CD14-positive monocyte (primary cell): ENCODE measurements at regions of chr17 and their contacts with region 1.

Region 1: GRCh38 chr17:31008374-31009041 is 37.7 kb downstream of the RNF135 start:
- DNase-seq: peak; percentile 43 to 57 (median 51)
- H3K4me3 ChIP-seq: peak overlapping the region; percentile 40 to 85 (median 40)
- H3K4me3 Mint-ChIP-seq: peak overlapping the region; percentile 91 to 94
- H3K27ac ChIP-seq: peak overlapping the region in 1 of 2 donors; percentile 38
- H3K27ac Mint-ChIP-seq: peak overlapping the region in 4 of 7 donors; percentile 35 to 83 (median 60)
- H3K4me1 ChIP-seq: peaks cover 18 to 28% of the 10 kb centered on the region in 2 donors
- H3K4me1 Mint-ChIP-seq: peaks cover 27% of the 10 kb centered on the region
- H3K27me3 ChIP-seq: peaks cover 0 to 5% of the 10 kb centered on the region in 2 donors
- H3K27me3 Mint-ChIP-seq: peaks cover 5 to 9% (median 6%) of the 10 kb centered on the region in 3 donors
- CTCF ChIP-seq: no peak

Region 2: DNA sequence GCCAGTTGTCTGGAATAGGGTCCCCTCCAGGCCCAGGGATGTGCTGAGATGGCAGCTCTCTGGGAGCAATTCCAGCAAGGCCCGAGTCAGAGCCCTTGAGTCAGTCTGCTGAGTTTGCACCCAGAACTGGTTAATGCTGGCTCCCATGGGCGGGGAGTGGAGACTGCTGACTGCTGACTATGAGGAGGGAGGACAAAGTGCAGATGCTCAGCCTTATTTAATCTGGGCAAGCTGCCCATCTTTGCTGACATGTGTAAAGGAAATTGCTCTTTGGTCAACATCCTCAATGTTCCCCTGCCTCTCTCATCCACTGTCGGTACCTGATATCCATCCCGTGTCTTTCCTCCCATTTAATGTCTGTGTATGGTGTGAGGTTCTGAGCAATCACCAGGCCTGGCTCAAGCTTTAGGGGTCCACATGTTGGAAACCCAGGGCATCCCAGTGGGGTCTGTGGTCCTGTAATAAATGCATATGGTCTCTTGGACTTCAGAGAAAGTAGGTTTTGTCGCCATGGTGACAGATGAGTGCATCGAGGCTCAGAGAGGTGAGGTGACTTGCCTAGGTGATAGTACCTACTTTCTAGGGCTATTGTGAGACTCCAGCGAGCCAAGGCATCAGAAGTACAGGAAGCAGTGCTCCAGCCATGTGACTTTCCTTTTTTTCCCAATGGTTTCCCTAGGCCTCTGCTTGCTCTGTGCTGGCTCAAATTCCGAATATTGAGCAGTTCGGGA is 57.7 kb before region 1 on chr17:
- intact Hi-C with region 1: no loop called
- DNase-seq: peak; percentile 73 to 77 (median 76)
- H3K4me3 ChIP-seq: peak overlapping the region in 1 of 3 experiments; percentile 18
- H3K4me3 Mint-ChIP-seq: peak overlapping the region in 1 of 2 donors; percentile 48
- H3K27ac ChIP-seq: peak overlapping the region; percentile 78 to 80
- H3K27ac Mint-ChIP-seq: peak overlapping the region; percentile 80 to 99 (median 90)
- H3K4me1 ChIP-seq: peaks cover 73% of the 10 kb centered on the region in 2 donors
- H3K4me1 Mint-ChIP-seq: peaks cover 64% of the 10 kb centered on the region
- H3K27me3 ChIP-seq: no peaks in the 10 kb centered on the region
- H3K27me3 Mint-ChIP-seq: peaks cover 0 to 5% (median 2%) of the 10 kb centered on the region in 3 donors
- CTCF ChIP-seq: no peak

Region 3: GRCh38 chr17:31130286-31131224 is 122.0 kb after region 1 on chr17:
- intact Hi-C with region 1: no loop called
- DNase-seq: peak in 1 of 3 donors; percentile 2
- H3K4me3 ChIP-seq: no peak overlapping the region
- H3K4me3 Mint-ChIP-seq: no peak overlapping the region
- H3K27ac ChIP-seq: no peak overlapping the region
- H3K27ac Mint-ChIP-seq: no peak overlapping the region
- H3K4me1 ChIP-seq: no peaks in the 10 kb centered on the region
- H3K4me1 Mint-ChIP-seq: peaks cover 7% of the 10 kb centered on the region
- H3K27me3 ChIP-seq: no peaks in the 10 kb centered on the region
- H3K27me3 Mint-ChIP-seq: no peaks in the 10 kb centered on the region
- CTCF ChIP-seq: no peak

Region 4: DNA sequence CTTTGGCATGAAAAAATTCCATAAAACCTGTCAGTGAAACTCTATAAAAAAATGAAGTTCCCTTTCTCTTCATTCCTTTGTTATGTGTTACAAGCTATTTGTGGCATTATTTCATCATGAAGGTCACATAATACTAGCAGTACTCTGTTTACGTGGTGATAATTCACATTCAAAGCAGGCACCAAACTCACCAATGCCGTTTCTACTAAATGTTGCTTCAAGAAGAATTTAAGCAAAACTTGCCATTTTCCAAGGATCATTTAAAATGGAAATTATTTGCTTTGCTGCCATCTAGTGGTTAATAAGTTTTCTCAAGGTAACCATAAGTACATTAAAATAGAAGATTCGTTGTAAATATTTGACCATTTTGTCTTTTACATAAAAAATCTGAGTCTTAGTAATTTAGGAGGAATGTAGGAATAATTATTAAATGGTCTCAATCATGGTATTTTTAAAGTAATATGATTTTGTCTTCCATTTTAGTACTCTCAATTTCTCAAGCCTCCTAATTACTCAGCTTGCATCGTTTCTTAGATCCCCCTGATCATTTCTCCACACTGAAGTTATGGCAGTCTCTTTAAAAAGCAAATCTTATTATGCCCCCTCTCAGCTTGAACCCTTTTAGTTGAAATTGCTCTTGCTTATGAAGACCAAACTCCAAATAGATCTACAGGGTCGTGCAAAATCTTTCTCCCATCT is 207.7 kb after region 1 on chr17:
- intact Hi-C with region 1: loop called in 1 of 2 experiments (anchors 5 kb)
- DNase-seq: peak; percentile 11 to 54 (median 19)
- H3K4me3 ChIP-seq: no peak overlapping the region
- H3K4me3 Mint-ChIP-seq: no peak overlapping the region
- H3K27ac ChIP-seq: no peak overlapping the region
- H3K27ac Mint-ChIP-seq: no peak overlapping the region
- H3K4me1 ChIP-seq: no peaks in the 10 kb centered on the region
- H3K4me1 Mint-ChIP-seq: no peaks in the 10 kb centered on the region
- H3K27me3 ChIP-seq: no peaks in the 10 kb centered on the region
- H3K27me3 Mint-ChIP-seq: no peaks in the 10 kb centered on the region
- CTCF ChIP-seq: peak; percentile 79

Region 5: GRCh38 chr17:31452101-31452500 is 443.6 kb after region 1 on chr17:
- intact Hi-C with region 1: no loop called
- DNase-seq: no peak
- H3K4me3 ChIP-seq: peak overlapping the region in 1 of 3 experiments; percentile 25
- H3K4me3 Mint-ChIP-seq: no peak overlapping the region
- H3K27ac ChIP-seq: peak overlapping the region; percentile 57 to 65
- H3K27ac Mint-ChIP-seq: peak overlapping the region; percentile 88 to 96 (median 92)
- H3K4me1 ChIP-seq: peaks cover 42 to 52% of the 10 kb centered on the region in 2 donors
- H3K4me1 Mint-ChIP-seq: peaks cover 51% of the 10 kb centered on the region
- H3K27me3 ChIP-seq: no peaks in the 10 kb centered on the region
- H3K27me3 Mint-ChIP-seq: peaks cover 0 to 3% (median 0%) of the 10 kb centered on the region in 3 donors
- CTCF ChIP-seq: no peak